Activated CD4-positive, alpha-beta memory T cell treated with anti-CD3 and anti-CD28 coated beads for 36 hours (primary cell): ENCODE measurements at regions of chr10 and their contacts with region 1.

Region 1: GRCh38 chr10:111598436-111599059 is 521.7 kb downstream of the ADRA2A start:
- DNase-seq: peak; percentile 54
- H3K4me3 Mint-ChIP-seq: no peak overlapping the region
- H3K27ac Mint-ChIP-seq: no peak overlapping the region
- H3K4me1 Mint-ChIP-seq: no peaks in the 10 kb centered on the region
- H3K27me3 Mint-ChIP-seq: peaks cover under 1% of the 10 kb centered on the region

Region 2: GRCh38 chr10:111076191-111076681 is 522.3 kb before region 1 on chr10:
- CTCF ChIA-PET with region 1: interaction called, 29 read pairs
- POLR2A ChIA-PET with region 1: no interaction called
- intact Hi-C with region 1: loop called (anchors 2 kb)
- DNase-seq: peak; percentile 70
- H3K4me3 Mint-ChIP-seq: peak overlapping the region; percentile 65
- H3K27ac Mint-ChIP-seq: no peak overlapping the region
- H3K4me1 Mint-ChIP-seq: peaks cover 11% of the 10 kb centered on the region
- H3K27me3 Mint-ChIP-seq: peaks cover 56% of the 10 kb centered on the region

Region 3: DNA sequence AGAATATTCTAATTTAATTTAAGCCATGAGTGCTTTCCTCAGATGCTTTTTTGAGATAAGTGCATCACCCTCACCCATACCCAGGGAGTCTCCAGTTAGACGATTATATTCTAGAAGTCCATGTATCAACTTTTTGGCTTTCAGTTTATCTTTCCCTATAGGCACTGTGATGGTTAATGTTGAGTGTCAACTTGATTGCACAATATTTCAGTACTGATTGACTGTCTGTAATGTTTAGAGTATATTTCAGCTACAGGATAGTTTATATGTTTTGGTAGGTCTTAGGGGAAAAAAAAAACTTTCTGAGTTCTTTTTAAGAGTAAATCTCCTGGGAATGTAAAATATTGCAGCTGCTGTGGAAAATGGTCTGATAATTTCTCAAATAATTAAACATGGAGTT is 13.7 kb after region 1 on chr10:
- CTCF ChIA-PET with region 1: interaction called, 14 read pairs
- POLR2A ChIA-PET with region 1: no interaction called
- intact Hi-C with region 1: no loop called
- DNase-seq: no peak
- H3K4me3 Mint-ChIP-seq: no peak overlapping the region
- H3K27ac Mint-ChIP-seq: no peak overlapping the region
- H3K4me1 Mint-ChIP-seq: no peaks in the 10 kb centered on the region
- H3K27me3 Mint-ChIP-seq: peaks cover 4% of the 10 kb centered on the region